Gastrocnemius medialis (tissue), 4 donors: ENCODE measurements at regions of chrX and their contacts with region 1.

Region 1: DNA sequence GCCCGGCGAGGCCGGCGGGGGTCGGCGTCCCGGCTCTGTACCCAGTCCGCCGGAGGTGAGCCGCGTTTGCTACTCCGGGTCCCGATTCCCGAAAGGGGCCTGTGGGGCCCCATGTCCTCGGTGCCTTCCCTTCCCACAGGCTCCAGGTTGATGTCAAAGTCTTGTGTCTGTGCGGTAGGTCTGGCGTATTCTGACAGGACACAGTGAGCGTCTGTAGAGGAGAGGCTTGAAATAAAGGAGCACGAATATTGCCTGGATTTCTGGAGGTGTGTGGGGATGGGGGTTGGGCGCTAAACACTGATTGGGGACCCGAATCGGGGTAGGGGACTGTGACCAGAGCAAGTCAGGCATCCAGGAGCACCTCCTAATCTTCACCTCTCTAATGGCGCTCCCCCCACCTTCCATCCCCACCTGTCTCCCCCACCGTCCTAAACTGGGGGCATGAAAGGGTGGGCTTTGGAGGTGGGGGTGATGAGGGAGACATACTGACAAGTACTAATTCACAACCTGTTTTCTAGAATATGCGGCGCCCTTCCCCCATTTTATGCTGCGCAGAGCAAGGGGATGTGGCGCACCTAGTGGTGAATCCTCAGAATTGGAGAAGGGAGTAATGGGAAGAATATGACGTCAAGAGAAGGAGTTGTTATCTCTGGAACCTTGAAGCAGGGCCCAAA is 841 bp downstream of the GPRASP2 start:
- DNase-seq: peak; percentile 9 to 27
- ATAC-seq: peak; percentile 79 to 83
- H3K4me3 ChIP-seq: peak overlapping the region; percentile 58 to 69 (median 60)
- H3K27ac ChIP-seq: peak overlapping the region; percentile 61 to 77 (median 68)
- H3K4me1 ChIP-seq: no peaks in the 10 kb centered on the region
- H3K27me3 ChIP-seq: no peaks in the 10 kb centered on the region
- CTCF ChIP-seq: peak; percentile 20 to 55 (median 44)
- POLR2A ChIP-seq: no peak

Region 2: GRCh38 chrX:101191217-101191750 is 1521.8 kb before region 1 on chrX:
- in situ Hi-C with region 1: no loop called
- intact Hi-C with region 1: no loop called
- DNase-seq: no peak
- ATAC-seq: no peak
- H3K4me3 ChIP-seq: peak overlapping the region in 1 of 4 donors; percentile 24
- H3K27ac ChIP-seq: no peak overlapping the region
- H3K4me1 ChIP-seq: no peaks in the 10 kb centered on the region
- H3K27me3 ChIP-seq: peaks cover 0 to 17% (median 8%) of the 10 kb centered on the region in 3 donors
- CTCF ChIP-seq: no peak
- POLR2A ChIP-seq: no peak

Region 3: DNA sequence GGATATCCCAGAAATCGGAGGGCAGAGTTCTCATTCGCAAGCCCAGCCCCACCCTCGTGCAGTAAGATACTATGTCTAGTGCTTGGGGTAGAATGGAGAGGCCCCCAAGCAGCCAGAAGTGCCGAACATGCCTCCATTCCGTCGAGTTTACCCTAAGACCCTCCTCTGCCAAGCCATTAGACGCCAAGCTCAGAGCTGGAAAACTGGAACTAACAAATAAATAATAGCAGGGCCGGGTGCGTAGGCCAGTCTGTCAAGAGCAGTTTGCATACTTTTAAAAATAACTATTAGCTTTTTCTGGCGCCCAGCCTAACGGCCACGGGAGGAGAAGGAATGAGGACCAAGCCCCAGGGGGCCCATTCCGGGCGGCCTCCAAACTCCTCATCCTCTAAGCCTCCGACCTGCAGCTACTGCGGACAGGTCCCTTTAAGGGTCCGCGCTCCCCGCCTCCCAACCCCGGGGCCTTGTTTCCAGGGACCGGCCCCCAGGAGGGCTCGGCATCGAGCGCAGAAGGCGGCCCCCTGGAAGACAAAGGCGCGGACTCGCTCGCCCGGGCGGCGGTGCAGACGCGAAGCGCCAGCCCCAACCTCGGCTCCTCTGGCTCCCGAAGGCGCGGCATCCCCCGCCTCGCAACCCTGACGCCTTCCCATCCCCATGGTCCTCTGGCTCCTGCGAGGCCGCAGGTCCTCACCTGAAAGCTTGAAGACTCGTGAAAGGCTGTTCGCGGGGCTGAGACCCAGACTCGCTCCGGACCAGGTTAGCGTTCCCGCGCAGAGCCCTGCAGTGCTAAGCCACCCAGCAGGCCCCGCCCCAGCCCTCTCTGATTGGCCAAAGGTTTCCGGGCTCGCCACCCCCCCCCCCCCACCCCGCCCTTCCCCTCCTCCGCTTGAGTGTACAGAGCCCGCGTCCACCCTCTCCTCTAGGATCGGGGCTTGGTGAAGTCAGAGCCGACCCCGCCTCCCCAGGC is 196.8 kb before region 1 on chrX and contains the start of gene TMSB15A:
- in situ Hi-C with region 1: no loop called
- intact Hi-C with region 1: loop called (anchors 10 kb)
- DNase-seq: peak; percentile 4 to 32
- ATAC-seq: peak in 1 of 2 donors; percentile 33
- H3K4me3 ChIP-seq: peak within 1 kb of the TSS; percentile 43 to 52 (median 47)
- H3K27ac ChIP-seq: no peak within 1 kb of the TSS
- H3K4me1 ChIP-seq: no peaks in the 10 kb centered on the region
- H3K27me3 ChIP-seq: peaks cover 0 to 36% (median 30%) of the 10 kb centered on the region in 3 donors
- CTCF ChIP-seq: no peak
- POLR2A ChIP-seq: no peak
- total RNA-seq, gene TMSB15A: not detected

Region 4: GRCh38 chrX:102599084-102599950 is 113.8 kb before region 1 on chrX and contains the start of gene ARMCX5:
- in situ Hi-C with region 1: no loop called
- intact Hi-C with region 1: loop called (anchors 5 kb)
- DNase-seq: peak; percentile 38 to 64
- ATAC-seq: peak; percentile 97
- H3K4me3 ChIP-seq: peak within 1 kb of the TSS; percentile 61 to 71 (median 65)
- H3K27ac ChIP-seq: peak within 1 kb of the TSS; percentile 59 to 83 (median 80)
- H3K4me1 ChIP-seq: no peaks in the 10 kb centered on the region
- H3K27me3 ChIP-seq: no peaks in the 10 kb centered on the region
- CTCF ChIP-seq: peak; percentile 12 to 26 (median 22)
- POLR2A ChIP-seq: peak; percentile 32 to 47
- total RNA-seq, gene ARMCX5: 2.4 to 7.9 (median 4.9) TPM

Region 5: DNA sequence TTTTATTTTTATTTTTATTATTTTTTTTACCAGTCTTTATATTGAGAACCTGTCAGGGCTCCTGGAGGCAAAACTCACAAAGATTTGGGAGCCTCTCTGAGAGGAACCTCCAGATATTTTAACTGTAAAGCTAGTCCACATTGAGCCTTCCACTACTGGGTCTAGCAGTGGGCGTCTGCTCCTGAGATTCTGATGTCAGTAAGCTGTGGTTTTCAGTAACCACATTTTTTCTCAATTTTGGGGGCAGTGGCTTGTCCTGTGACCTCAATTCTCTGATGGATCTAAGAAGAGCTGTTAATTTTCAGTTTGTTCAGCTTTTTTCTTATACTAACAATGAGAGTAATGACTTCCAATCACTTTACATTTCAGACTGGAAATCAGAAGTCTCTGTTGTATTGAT is 85.4 kb before region 1 on chrX:
- in situ Hi-C with region 1: no loop called
- intact Hi-C with region 1: no loop called
- DNase-seq: no peak
- ATAC-seq: no peak
- H3K4me3 ChIP-seq: no peak overlapping the region
- H3K27ac ChIP-seq: no peak overlapping the region
- H3K4me1 ChIP-seq: peaks cover 0 to 3% of the 10 kb centered on the region in 2 donors
- H3K27me3 ChIP-seq: no peaks in the 10 kb centered on the region
- CTCF ChIP-seq: no peak
- POLR2A ChIP-seq: no peak

Region 6: GRCh38 chrX:102652031-102652688 is 60.9 kb before region 1 on chrX:
- in situ Hi-C with region 1: no loop called
- intact Hi-C with region 1: loop called (anchors 5 kb)
- DNase-seq: peak in 1 of 2 donors; percentile 29
- ATAC-seq: peak; percentile 56 to 70
- H3K4me3 ChIP-seq: peak overlapping the region; percentile 61 to 76 (median 70)
- H3K27ac ChIP-seq: peak overlapping the region; percentile 55 to 60 (median 60)
- H3K4me1 ChIP-seq: no peaks in the 10 kb centered on the region
- H3K27me3 ChIP-seq: no peaks in the 10 kb centered on the region
- CTCF ChIP-seq: peak in 4 of 5 experiments; percentile 19 to 44 (median 34)
- POLR2A ChIP-seq: no peak

Region 7: GRCh38 chrX:102835504-102836146 is 122.5 kb after region 1 on chrX:
- in situ Hi-C with region 1: no loop called
- intact Hi-C with region 1: no loop called
- DNase-seq: no peak
- ATAC-seq: no peak
- H3K4me3 ChIP-seq: no peak overlapping the region
- H3K27ac ChIP-seq: no peak overlapping the region
- H3K4me1 ChIP-seq: no peaks in the 10 kb centered on the region
- H3K27me3 ChIP-seq: no peaks in the 10 kb centered on the region
- CTCF ChIP-seq: peak in 2 of 5 experiments; percentile 9 to 32
- POLR2A ChIP-seq: no peak